ENCODE measurements at regions of chr17 and their contacts with region 1.

Region 1: DNA sequence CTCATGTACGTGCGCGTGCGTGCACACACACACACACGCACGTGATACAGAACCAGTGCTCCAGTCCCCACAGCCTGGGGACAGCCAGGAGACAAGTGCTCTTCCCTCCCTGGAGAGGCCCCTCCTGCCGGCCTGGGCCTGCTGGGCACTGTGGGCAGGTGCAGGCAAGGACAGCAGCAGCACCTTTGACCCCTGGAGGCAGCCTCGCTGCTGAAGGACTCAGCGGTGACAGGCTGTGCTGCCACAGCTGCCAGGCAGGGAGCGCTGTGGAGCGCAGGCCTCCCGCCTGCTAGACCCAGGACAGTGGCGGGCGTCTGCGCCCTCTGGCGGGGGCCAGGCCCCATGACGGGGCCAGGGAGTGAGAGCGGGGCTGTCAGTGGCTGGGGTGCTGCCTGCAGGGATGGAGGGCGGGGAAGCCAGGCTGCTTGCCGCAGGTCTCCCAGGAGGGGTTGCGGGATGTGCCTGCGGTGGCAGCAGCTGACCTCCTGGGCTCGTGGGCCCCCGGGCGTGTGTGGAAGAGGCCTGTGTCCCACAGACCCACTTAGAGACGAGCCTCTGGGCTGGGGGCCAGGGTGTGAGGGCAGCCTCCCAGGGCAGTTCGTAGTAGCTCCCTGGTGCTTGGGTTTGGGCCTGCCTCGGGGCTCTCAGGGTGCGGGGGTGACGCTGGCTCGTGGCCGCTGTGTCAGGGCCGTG is 63.5 kb upstream of the PVALEF start:
- DNase-seq: peak; percentile 75 to 96 (median 90)
- ATAC-seq: peak; percentile 92 to 96 (median 94)
- H3K4me3 ChIP-seq: no peak overlapping the region
- H3K27ac ChIP-seq: no peak overlapping the region
- H3K4me1 ChIP-seq: no peaks in the 10 kb centered on the region
- H3K27me3 ChIP-seq: no peaks in the 10 kb centered on the region
- CTCF ChIP-seq: peak; percentile 99 to 100 (median 100)

Region 2: GRCh38 chr17:80426681-80427326 is 675.0 kb before region 1 on chr17:
- intact Hi-C with region 1: loop called in 1 of 3 experiments (anchors 10 kb)
- DNase-seq: peak; percentile 71 to 95 (median 86)
- ATAC-seq: peak; percentile 88 to 99 (median 96)
- H3K4me3 ChIP-seq: no peak overlapping the region
- H3K27ac ChIP-seq: no peak overlapping the region
- H3K4me1 ChIP-seq: peaks cover 0 to 3% (median 0%) of the 10 kb centered on the region in 3 donors
- H3K27me3 ChIP-seq: no peaks in the 10 kb centered on the region
- CTCF ChIP-seq: peak; percentile 91 to 98 (median 96)

Region 3: DNA sequence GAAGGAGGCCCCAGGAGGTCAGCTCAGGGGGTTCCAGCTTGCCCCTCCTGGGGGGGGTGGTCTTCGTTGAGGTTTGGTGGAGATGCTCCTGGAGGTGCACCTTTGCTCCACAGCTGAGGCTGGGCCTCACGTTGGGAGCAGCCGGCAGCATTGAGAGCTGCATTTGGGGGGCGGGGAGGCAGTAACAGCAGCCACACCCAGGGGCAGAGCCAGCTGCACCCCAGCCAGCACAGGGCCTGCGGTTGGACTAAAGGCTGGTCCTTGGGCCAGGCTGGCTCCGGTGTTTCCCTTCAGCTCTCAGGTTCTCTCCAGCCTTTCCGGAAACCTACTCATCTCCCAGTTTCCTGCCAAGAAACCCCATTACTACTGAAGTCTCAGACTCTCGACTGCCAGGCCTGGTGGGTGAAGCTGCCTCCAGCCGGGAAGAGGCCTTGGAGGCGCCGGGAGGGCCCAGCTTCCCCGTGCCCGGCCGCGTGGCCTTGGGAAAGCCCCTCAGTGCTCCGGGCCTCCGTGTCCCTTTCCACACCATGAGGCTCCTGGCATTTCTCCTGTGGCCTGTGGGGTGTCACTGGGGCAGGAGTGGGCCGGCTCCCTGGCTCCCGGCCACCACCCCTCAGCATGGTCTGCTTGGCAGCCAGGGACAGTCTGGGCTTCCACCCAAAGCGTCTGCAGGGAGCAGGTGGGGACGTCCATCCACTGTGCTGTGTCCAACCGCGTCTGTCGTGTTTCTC is 80.8 kb before region 1 on chr17:
- intact Hi-C with region 1: loop called in 2 of 3 experiments (anchors 5 kb)
- DNase-seq: peak in 3 of 6 donors; percentile 12 to 72 (median 37)
- ATAC-seq: no peak
- H3K4me3 ChIP-seq: no peak overlapping the region
- H3K27ac ChIP-seq: no peak overlapping the region
- H3K4me1 ChIP-seq: no peaks in the 10 kb centered on the region
- H3K27me3 ChIP-seq: peaks cover 0 to 3% (median 0%) of the 10 kb centered on the region in 4 donors
- CTCF ChIP-seq: no peak

Region 4: DNA sequence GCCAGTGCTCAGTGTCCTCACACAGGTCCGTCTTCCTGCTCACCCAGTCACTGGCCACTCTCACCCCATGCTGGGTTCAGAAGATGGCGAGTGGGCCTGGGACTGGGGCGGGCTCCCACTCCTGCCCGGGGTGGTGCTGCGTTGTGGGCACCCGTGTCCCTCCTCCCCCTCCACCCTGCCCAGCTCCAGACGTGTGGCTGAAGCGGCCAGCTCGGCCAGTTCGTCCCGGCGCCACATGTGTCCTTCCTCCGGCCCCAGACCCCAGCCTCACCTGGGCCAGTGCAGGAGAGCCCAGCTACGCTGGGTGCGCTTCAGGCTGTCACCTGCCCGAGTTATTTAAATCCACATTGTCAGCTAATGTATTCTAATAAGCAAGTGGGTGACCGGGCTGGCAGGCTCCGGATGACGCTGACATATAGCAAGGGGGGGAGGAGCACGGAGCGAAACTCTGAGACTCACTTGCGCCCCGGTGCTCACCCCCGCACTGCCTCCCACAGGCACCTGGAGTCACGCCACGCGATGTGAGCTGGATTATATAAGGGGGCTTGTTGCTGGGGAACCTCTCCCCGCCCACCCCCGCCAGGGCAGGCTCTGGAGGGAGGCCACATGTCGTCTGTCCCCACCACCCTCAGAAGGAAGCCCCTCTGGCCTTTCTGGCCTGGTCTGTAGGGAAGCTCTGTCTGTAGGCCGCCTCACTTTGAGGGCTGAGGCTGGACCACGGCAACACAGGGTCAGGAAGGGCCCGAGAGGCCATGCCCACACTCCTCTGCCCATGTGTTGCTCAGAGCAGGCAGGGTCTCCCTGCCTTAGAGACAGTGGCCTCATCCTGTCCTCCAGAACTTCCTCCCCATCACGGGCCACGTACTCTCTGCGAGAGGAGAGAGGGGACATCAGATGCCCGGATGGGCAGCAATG is 73.9 kb before region 1 on chr17:
- intact Hi-C with region 1: loop called in 2 of 3 experiments (anchors 5 kb)
- DNase-seq: peak in 1 of 6 donors; percentile 73
- ATAC-seq: peak in 3 of 4 donors; percentile 3 to 17 (median 3)
- H3K4me3 ChIP-seq: no peak overlapping the region
- H3K27ac ChIP-seq: no peak overlapping the region
- H3K4me1 ChIP-seq: peaks cover 0 to 5% (median 0%) of the 10 kb centered on the region in 3 donors
- H3K27me3 ChIP-seq: peaks cover 0 to 3% (median 0%) of the 10 kb centered on the region in 4 donors
- CTCF ChIP-seq: no peak

Measured in pancreas (tissue), 10 donors.